Activated naive CD4-positive, alpha-beta T cell treated with anti-CD3 and anti-CD28 coated beads for 36 hours (primary cell): ENCODE measurements at regions of chr18 and their contacts with region 1.

Region 1: GRCh38 chr18:24075731-24076130 is 61.2 kb downstream of the TTC39C start:
- DNase-seq: no peak
- H3K4me3 Mint-ChIP-seq: no peak overlapping the region
- H3K27ac Mint-ChIP-seq: peak overlapping the region; percentile 82
- H3K4me1 Mint-ChIP-seq: peaks cover 32% of the 10 kb centered on the region
- H3K27me3 Mint-ChIP-seq: no peaks in the 10 kb centered on the region

Region 2: GRCh38 chr18:23964282-23965238 is 111.2 kb before region 1 on chr18:
- CTCF ChIA-PET with region 1: no interaction called
- intact Hi-C with region 1: loop called (anchors 1 kb)
- DNase-seq: peak; percentile 75
- H3K4me3 Mint-ChIP-seq: peak overlapping the region; percentile 43
- H3K27ac Mint-ChIP-seq: peak overlapping the region; percentile 81
- H3K4me1 Mint-ChIP-seq: peaks cover 45% of the 10 kb centered on the region
- H3K27me3 Mint-ChIP-seq: no peaks in the 10 kb centered on the region

Region 3: DNA sequence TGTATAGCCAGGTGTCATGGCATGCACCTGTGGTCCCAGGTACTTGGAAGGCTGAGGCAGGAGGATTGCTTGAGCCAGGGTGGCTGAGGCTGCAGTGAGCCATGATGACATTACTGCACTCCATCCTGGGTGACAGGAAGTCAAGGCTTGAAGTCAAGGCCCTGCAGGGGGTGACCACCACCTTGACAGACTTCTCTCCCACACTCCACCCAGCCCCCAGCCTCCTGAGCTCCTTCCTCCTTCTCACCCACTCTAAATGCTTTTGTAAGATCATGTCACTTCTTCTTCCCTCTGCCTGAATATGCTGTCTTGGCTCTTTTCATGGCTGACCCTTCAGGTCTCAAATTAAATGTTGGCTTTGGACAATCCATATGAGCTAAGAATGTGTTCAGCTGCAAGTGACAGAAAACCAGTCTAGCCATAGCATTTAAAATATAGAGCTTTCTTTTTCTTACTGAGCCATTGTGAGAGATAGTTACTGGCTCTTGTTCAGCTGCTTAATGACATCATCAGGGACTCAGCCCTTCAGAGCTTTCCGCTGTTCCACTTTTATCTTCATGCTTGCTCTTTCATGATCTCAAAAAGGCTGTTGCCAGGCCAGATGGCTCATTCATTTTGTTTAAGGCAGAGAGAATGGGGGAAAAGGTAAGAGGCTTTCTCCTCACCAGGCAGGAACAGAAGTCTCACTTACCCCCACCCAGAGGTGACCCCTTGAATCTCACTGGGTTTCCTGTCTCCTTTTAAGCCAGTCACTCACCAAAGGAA is 97.8 kb before region 1 on chr18:
- CTCF ChIA-PET with region 1: interaction called, 3 read pairs
- intact Hi-C with region 1: loop called (anchors 1 kb)
- DNase-seq: peak; percentile 51
- H3K4me3 Mint-ChIP-seq: no peak overlapping the region
- H3K27ac Mint-ChIP-seq: peak overlapping the region; percentile 57
- H3K4me1 Mint-ChIP-seq: peaks cover 22% of the 10 kb centered on the region
- H3K27me3 Mint-ChIP-seq: no peaks in the 10 kb centered on the region

Region 4: DNA sequence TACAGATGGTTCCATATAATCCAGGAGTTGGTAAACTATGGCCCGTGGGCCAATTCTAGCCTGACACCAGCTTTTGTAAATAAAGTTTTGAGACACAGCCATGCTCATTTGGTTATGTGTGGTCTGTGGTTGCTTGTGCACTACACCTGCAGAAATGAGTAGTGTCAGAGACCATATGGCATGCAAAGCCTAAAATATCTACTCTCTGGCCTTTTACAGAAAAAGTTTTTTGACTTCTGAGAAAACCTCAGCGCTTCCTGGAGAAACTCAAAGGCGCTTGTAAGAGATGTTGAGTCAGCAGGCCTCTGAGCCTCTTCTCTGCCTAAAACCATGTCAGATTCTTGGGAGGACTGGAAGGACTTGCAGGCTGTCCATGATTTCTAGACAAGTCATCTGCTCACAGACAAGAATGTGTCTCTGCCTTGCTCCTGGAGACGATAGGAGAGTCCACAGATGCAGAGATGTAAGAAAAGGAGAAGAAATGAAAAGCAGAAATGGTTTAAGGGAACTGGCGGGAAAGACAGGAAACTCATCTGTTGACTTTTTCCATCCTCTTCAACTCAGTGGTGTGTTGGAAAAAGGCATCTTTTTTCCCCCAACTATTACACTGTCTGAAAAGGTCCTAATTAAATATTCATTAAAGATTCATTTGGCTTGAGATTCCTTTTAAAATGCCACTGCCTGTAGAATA is 55.9 kb before region 1 on chr18:
- CTCF ChIA-PET with region 1: no interaction called
- intact Hi-C with region 1: loop called (anchors 1 kb)
- DNase-seq: peak; percentile 81
- H3K4me3 Mint-ChIP-seq: peak overlapping the region; percentile 64
- H3K27ac Mint-ChIP-seq: peak overlapping the region; percentile 94
- H3K4me1 Mint-ChIP-seq: peaks cover 83% of the 10 kb centered on the region
- H3K27me3 Mint-ChIP-seq: no peaks in the 10 kb centered on the region

Region 5: GRCh38 chr18:24063121-24063731 is 12.5 kb before region 1 on chr18:
- CTCF ChIA-PET with region 1: interaction called, 11 read pairs
- intact Hi-C with region 1: loop called (anchors 1 kb)
- DNase-seq: peak; percentile 47
- H3K4me3 Mint-ChIP-seq: no peak overlapping the region
- H3K27ac Mint-ChIP-seq: peak overlapping the region; percentile 7
- H3K4me1 Mint-ChIP-seq: peaks cover 53% of the 10 kb centered on the region
- H3K27me3 Mint-ChIP-seq: no peaks in the 10 kb centered on the region

Region 6: DNA sequence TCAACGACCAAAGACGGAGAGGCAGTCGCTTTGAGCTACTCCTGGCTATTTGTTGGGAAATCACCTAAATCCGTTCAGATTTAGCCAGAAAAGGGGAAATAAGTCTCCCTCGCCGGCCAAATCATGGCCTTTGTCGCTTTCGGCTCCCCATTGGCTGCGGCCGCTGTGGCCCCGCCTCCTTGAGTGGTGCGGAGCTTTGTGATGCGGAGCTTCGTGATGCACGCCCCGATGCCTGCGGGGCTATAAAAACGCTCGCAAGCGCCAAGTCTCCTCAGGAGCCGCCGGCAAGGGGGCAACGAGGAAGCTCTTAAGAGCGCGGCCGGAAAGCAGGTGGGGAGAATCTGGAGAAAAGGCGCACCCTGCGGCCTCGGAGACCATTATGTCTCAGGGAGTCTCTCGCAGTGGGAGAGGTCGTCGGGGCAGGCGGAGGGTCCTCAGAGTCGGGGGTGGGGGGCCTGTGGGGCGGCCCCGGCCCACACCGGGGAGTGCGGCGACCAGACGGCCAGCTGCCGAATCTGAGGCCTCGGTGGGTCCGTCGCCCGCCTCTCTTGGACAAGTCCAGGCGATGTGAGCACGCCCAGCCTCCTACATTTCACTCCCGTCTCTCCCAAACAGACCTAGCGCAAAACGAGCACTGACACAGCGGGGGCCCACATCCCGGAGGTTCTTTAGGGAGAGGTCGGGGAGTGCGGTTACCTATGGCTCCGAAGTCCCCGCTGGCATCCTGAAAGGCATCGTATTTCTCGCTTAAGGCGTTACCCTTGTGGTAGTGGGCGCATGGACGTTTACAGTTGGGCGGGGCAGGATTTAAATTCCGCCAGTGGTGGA is 63.3 kb after region 1 on chr18 and contains the start of gene CABYR:
- CTCF ChIA-PET with region 1: no interaction called
- intact Hi-C with region 1: no loop called
- DNase-seq: peak; percentile 86
- H3K4me3 Mint-ChIP-seq: peak within 1 kb of the TSS; percentile 90
- H3K27ac Mint-ChIP-seq: no peak within 1 kb of the TSS
- H3K4me1 Mint-ChIP-seq: peaks cover 7% of the 10 kb centered on the region
- H3K27me3 Mint-ChIP-seq: peaks cover 11% of the 10 kb centered on the region
- total RNA-seq, gene CABYR: 1.2 to 1.7 TPM